ENCODE measurements at regions of chr20 and their contacts with region 1.

Region 1: GRCh38 chr20:46132705-46133120 is 14.6 kb downstream of the CD40 start:
- DNase-seq: peak; percentile 63 to 87 (median 78)
- H3K4me3 ChIP-seq: no peak overlapping the region
- H3K27ac ChIP-seq: no peak overlapping the region
- H3K4me1 ChIP-seq: no peaks in the 10 kb centered on the region
- H3K27me3 ChIP-seq: peaks cover 9% of the 10 kb centered on the region
- CTCF ChIP-seq: peak; percentile 53 to 91 (median 83)
- POLR2A ChIP-seq: no peak

Region 2: GRCh38 chr20:46174469-46175128 is 41.9 kb after region 1 on chr20:
- intact Hi-C with region 1: loop called in 1 of 2 experiments (anchors 5 kb)
- DNase-seq: peak; percentile 55 to 87 (median 79)
- H3K4me3 ChIP-seq: no peak overlapping the region
- H3K27ac ChIP-seq: no peak overlapping the region
- H3K4me1 ChIP-seq: no peaks in the 10 kb centered on the region
- H3K27me3 ChIP-seq: peaks cover 11% of the 10 kb centered on the region
- CTCF ChIP-seq: peak; percentile 22 to 76 (median 53)
- POLR2A ChIP-seq: no peak

Region 3: GRCh38 chr20:46186210-46186609 is 53.5 kb after region 1 on chr20:
- intact Hi-C with region 1: no loop called
- DNase-seq: no peak
- H3K4me3 ChIP-seq: no peak overlapping the region
- H3K27ac ChIP-seq: no peak overlapping the region
- H3K4me1 ChIP-seq: no peaks in the 10 kb centered on the region
- H3K27me3 ChIP-seq: no peaks in the 10 kb centered on the region
- CTCF ChIP-seq: no peak
- POLR2A ChIP-seq: no peak

Region 4: DNA sequence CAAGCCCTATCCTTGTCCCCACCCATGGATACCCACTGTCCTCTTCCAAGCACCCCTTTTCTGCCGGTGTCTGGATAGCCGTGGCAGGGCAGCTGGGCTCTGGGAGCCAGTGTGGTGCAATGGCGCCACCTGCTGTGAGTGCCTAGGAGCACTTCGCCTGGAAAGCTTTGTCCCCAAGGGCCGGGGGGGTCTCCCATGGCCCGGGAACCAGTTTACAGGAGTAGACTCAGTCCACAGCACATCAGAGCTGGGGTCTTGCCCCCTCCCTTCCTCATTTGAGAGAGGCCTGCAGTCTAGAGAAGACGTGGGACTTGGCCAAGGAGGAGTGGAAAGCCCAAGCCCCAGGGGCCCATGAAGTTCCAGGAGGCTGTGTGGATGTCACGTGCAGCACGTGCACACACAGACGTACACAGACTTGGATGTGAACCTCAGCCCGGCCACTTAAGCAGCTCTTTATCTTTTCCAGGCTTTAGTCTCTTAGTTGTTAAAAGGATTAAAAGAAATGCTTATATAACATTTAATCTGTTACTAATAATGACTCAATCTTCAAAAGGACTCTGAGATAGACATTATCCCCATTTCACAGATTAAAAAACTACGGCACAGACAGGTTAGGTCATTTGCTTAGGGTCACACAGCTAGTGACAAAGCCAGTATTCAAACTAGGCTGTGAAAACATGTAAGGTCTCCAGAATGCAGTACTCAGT is 216.5 kb after region 1 on chr20:
- intact Hi-C with region 1: loop called (anchors 5 to 10 kb)
- DNase-seq: peak; percentile 59 to 86 (median 73)
- H3K4me3 ChIP-seq: no peak overlapping the region
- H3K27ac ChIP-seq: peak overlapping the region in 2 of 5 donors; percentile 82 to 88
- H3K4me1 ChIP-seq: peaks cover 16 to 30% of the 10 kb centered on the region in 2 donors
- H3K27me3 ChIP-seq: no peaks in the 10 kb centered on the region
- CTCF ChIP-seq: peak; percentile 55 to 86 (median 78)
- POLR2A ChIP-seq: no peak